ENCODE measurements at regions of chr18 and their contacts with region 1.

Region 1: GRCh38 chr18:8988261-8988871 is 114.1 kb upstream of the NDUFV2 start:
- DNase-seq: peak; percentile 62
- H3K4me3 ChIP-seq: no peak overlapping the region
- H3K27ac ChIP-seq: no peak overlapping the region
- H3K4me1 ChIP-seq: no peaks in the 10 kb centered on the region
- H3K27me3 ChIP-seq: no peaks in the 10 kb centered on the region
- CTCF ChIP-seq: peak; percentile 78 to 87
- POLR2A ChIP-seq: no peak

Region 2: GRCh38 chr18:8478166-8478967 is 510.0 kb before region 1 on chr18:
- CTCF ChIA-PET with region 1: interaction called, 35 read pairs
- POLR2A ChIA-PET with region 1: no interaction called
- dilution Hi-C with region 1: no loop called
- intact Hi-C with region 1: loop called (anchors 1 kb)
- DNase-seq: peak; percentile 55
- H3K4me3 ChIP-seq: no peak overlapping the region
- H3K27ac ChIP-seq: no peak overlapping the region
- H3K4me1 ChIP-seq: no peaks in the 10 kb centered on the region
- H3K27me3 ChIP-seq: peaks cover 0 to 3% of the 10 kb centered on the region in 2 experiments
- CTCF ChIP-seq: peak; percentile 67 to 92
- POLR2A ChIP-seq: no peak

Region 3: GRCh38 chr18:8654503-8655451 is 333.6 kb before region 1 on chr18:
- CTCF ChIA-PET with region 1: interaction called, 146 read pairs
- POLR2A ChIA-PET with region 1: no interaction called
- dilution Hi-C with region 1: loop called (anchors 25 kb)
- intact Hi-C with region 1: loop called (anchors 1 kb)
- DNase-seq: peak; percentile 29
- H3K4me3 ChIP-seq: no peak overlapping the region
- H3K27ac ChIP-seq: no peak overlapping the region
- H3K4me1 ChIP-seq: peaks cover 2% of the 10 kb centered on the region
- H3K27me3 ChIP-seq: peaks cover 2 to 6% of the 10 kb centered on the region in 2 experiments
- CTCF ChIP-seq: peak; percentile 21 to 45
- POLR2A ChIP-seq: no peak

Region 4: DNA sequence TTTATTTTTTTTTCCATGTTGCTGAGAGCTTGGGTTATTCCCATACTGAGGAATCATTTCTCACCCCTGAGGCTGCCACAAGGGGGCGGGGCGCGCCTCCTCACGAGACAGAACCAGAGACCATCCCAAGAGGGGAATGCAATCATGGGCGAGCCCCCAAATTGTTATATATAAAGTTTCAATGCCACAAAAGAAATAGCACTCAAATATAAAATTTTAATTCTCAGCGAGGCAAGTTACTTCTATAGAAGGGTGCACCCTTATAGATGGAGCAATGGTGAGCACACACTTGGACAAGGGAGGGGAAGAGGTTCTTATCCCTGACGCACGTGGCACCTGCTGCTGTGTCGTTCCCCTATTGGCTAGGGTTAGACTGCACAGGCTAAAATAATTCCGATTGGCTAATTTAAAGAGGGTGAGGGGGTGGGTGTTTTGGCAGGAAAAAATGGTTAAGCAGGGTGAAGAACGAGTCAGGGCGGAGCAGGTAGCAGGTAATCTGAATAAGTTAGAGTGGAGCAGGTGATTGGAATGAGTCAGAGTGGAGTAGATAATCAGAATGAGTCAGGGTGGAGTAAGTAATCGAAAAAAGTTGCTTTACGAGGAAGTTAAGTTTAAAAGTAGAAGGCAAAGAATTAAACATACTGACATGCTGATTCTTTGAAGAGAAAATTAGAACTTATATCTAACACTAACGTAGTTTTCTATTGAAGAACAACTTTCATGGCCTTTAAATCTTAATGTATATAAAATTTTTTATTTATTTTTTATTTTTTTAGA is 105.5 kb before region 1 on chr18:
- CTCF ChIA-PET with region 1: interaction called, 9 read pairs
- POLR2A ChIA-PET with region 1: no interaction called
- dilution Hi-C with region 1: no loop called
- intact Hi-C with region 1: loop called (anchors 5 kb)
- DNase-seq: peak; percentile 7
- H3K4me3 ChIP-seq: no peak overlapping the region
- H3K27ac ChIP-seq: no peak overlapping the region
- H3K4me1 ChIP-seq: no peaks in the 10 kb centered on the region
- H3K27me3 ChIP-seq: peaks cover 0 to 1% of the 10 kb centered on the region in 2 experiments
- CTCF ChIP-seq: peak; percentile 5 to 23
- POLR2A ChIP-seq: no peak

Region 5: GRCh38 chr18:9017170-9017904 is 29.0 kb after region 1 on chr18:
- CTCF ChIA-PET with region 1: interaction called, 10 read pairs
- POLR2A ChIA-PET with region 1: no interaction called
- dilution Hi-C with region 1: no loop called
- intact Hi-C with region 1: no loop called
- DNase-seq: peak; percentile 87
- H3K4me3 ChIP-seq: no peak overlapping the region
- H3K27ac ChIP-seq: peak overlapping the region; percentile 90
- H3K4me1 ChIP-seq: peaks cover 23% of the 10 kb centered on the region
- H3K27me3 ChIP-seq: no peaks in the 10 kb centered on the region
- CTCF ChIP-seq: no peak
- POLR2A ChIP-seq: peak; percentile 23

Region 6: DNA sequence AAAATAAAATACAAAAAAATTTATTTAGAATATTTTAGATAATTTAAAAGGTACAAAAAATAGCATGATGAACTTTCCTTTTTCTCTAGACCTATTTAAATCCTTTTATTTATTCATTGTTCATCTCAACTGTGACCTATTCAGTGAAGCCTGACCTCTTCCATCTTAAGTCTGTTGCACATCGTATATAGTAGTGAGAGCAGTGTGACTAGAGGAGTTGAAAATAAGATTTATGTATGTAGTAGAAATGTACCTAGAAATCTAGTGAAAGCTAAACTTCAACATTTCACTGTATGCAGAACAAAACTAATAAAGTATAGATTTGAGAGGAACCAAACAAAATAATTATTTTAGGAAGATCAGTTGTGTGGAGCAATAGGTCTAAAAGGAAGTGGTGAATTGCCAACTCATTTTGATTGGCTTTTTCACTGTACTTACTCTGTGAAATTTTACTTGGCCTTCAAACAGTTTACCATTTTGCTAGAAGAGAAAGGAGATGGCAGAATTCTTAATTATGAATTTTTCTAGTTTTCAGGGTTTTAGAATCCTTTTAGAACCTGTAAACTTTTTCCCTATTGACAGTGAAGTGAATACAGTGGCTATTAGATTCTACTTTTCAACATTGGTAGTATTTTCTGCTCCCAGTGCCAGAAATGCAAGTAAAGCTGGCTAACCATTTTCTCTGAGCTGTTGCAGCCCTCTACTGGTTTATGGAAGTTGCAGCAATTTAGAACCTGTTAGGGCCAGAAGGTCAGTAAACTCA is 159.3 kb after region 1 on chr18:
- CTCF ChIA-PET with region 1: interaction called, 6 read pairs
- POLR2A ChIA-PET with region 1: no interaction called
- dilution Hi-C with region 1: no loop called
- intact Hi-C with region 1: loop called (anchors 2 kb)
- DNase-seq: peak; percentile 79
- H3K4me3 ChIP-seq: no peak overlapping the region
- H3K27ac ChIP-seq: no peak overlapping the region
- H3K4me1 ChIP-seq: peaks cover 12% of the 10 kb centered on the region
- H3K27me3 ChIP-seq: no peaks in the 10 kb centered on the region
- CTCF ChIP-seq: peak; percentile 52 to 63
- POLR2A ChIP-seq: no peak